Breast epithelium (tissue), 4 donors: ENCODE measurements at regions of chr7 and their contacts with region 1.

Region 1: DNA sequence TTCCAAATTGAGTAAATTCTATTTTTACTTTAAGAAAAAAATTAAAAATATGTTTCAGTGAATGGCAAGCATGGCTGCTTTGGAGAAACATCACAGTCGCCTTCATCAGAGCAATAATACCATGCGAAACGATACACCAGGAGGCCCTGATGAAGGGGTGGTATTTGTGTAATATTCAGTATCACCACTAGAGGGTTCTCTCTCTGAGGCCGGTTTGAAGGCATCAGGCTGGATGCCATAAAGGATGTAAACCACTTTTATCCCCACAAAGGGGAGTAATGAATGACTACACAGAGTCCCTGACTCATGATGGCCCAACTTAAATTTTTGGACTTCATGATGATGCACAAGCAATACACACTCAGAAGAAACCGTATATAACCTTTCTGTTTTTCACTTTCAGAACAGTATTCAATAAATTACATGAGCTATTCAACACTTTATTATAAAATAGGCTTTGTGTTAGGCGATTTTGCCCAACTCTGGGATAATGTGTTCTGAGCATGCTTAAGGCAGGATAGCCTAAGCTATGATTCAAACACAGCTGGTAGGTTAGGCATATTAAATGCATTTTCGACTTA is 95.5 kb downstream of the PPP1R17 start:
- DNase-seq: no peak
- H3K4me3 ChIP-seq: no peak overlapping the region
- H3K27ac ChIP-seq: no peak overlapping the region
- H3K4me1 ChIP-seq: no peaks in the 10 kb centered on the region
- H3K27me3 ChIP-seq: no peaks in the 10 kb centered on the region
- CTCF ChIP-seq: peak in 2 of 3 donors; percentile 52 to 53
- POLR2A ChIP-seq: no peak

Region 2: DNA sequence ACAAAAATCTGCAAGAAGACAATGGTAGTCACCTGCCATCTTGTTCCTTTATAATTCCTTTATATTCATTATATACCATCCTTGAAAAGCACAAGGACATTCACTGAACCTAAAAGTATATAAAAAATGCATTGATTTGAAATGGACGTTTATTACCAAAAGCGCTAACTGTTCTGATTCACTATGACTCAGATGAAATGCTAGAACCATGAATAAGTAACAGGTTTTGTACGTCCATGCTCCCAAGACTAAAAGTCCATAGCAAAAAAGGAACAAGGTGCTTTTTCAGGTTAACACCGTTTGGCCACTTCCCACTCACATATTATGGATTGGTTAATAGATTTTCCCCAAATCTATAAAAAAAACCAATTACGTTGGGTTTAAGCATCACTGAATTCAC is 13.9 kb after region 1 on chr7:
- intact Hi-C with region 1: no loop called
- DNase-seq: no peak
- H3K4me3 ChIP-seq: no peak overlapping the region
- H3K27ac ChIP-seq: no peak overlapping the region
- H3K4me1 ChIP-seq: no peaks in the 10 kb centered on the region
- H3K27me3 ChIP-seq: no peaks in the 10 kb centered on the region
- CTCF ChIP-seq: no peak
- POLR2A ChIP-seq: no peak

Region 3: DNA sequence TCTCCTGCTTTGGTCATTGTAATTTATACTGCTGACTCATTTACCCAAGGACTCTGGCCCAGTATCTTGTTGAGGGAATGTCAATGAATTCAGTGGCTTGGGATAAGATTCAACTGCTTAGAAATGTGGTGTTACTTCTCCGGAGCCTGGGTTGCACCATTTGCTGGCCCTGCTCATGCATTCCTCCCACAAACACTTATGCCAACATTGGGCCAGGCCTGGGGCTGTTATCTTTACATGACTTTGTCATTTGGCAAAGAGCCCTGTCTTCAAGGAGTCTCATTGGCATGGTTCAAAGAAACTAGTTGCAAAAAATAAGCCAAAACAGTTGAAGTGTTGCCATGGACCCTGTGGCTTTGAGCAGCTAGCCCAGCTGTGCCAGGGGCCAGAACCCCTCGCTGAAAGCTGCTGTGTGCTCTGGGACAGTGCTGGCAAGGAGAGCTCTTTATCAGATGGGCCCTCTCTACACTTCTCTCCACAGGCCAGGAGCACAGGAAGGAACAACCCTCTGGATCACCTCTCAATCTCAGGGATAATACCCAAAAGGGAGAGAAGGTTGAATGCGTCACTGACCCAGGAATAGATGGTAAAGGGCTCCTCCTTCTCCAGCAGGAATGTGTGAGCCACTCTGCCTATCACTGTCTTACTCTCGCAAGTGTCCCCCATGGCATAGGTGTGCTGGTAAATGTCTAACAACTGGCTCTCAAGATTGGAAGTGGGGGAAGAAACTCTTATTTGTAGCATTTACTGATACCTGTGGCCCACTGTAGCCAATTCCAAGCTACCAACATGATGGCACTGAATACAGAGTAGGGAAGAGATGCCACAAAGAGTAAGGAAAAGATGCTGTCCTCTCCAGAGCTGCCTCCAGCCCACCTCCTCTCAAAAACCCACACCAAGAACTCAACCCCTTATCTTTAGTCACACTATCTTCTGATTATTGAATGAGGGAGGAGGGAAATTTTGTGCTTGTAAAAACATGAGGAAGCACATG is 311.2 kb after region 1 on chr7:
- intact Hi-C with region 1: loop called (anchors 5 kb)
- DNase-seq: peak in 1 of 2 donors; percentile 94
- H3K4me3 ChIP-seq: no peak overlapping the region
- H3K27ac ChIP-seq: peak overlapping the region; percentile 64 to 75
- H3K4me1 ChIP-seq: peaks cover 0 to 10% of the 10 kb centered on the region in 2 donors
- H3K27me3 ChIP-seq: no peaks in the 10 kb centered on the region
- CTCF ChIP-seq: no peak
- POLR2A ChIP-seq: no peak